ENCODE measurements at regions of chr11 and their contacts with region 1.

Region 1: GRCh38 chr11:62217191-62217748 is 8.8 kb downstream of the SCGB2A1 start:
- DNase-seq: peak; percentile 37
- H3K27ac ChIP-seq: no peak overlapping the region
- CTCF ChIP-seq: peak; percentile 45

Region 2: GRCh38 chr11:62048065-62048464 is 169.2 kb before region 1 on chr11:
- CTCF ChIA-PET with region 1: no interaction called
- POLR2A ChIA-PET with region 1: no interaction called
- DNase-seq: peak; percentile 24
- H3K27ac ChIP-seq: peak overlapping the region; percentile 68
- CTCF ChIP-seq: no peak

Region 3: DNA sequence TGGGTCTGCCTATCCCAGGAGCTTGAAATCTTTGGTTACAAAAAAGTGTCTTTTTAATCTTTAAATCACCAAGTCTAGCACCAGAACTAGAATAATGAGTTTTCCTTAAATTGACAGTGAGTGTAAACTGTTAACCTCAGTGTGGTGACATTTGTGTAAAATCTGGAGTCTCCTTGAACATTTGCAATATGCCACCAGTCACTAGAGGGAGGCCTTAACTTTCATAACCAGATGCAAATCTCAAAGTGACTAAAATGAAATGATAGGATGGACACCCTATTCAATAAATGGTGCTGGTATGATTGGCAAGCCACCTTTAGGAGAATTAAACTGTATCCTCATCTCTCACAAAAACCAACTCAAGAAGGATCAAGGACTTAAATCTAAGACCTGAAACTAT is 16.5 kb after region 1 on chr11:
- CTCF ChIA-PET with region 1: no interaction called
- POLR2A ChIA-PET with region 1: no interaction called
- DNase-seq: no peak
- H3K27ac ChIP-seq: no peak overlapping the region
- CTCF ChIP-seq: no peak

Region 4: DNA sequence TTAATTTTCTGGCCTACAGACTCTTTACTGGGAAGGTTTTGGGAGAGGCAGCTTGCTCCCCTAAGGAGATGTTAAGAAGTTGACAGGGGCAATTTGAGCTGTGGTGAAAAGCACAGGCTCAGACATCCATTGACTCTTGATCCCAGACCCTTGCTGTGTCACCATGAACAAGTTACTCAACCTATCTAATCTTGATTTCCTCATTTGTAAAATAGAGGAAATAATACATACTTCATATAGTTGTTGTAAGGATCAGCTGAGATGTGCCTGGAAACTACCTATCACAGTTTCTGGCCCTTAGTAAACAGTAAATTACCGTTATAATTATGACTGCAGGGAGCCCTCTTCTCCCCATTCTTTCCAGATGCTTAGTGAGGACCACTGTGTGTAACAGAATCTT is 98.2 kb after region 1 on chr11:
- CTCF ChIA-PET with region 1: interaction called, 19 read pairs
- POLR2A ChIA-PET with region 1: no interaction called
- DNase-seq: no peak
- H3K27ac ChIP-seq: no peak overlapping the region
- CTCF ChIP-seq: no peak

Region 5: GRCh38 chr11:62573592-62574362 is 356.5 kb after region 1 on chr11 and contains the start of gene EEF1G:
- CTCF ChIA-PET with region 1: no interaction called
- POLR2A ChIA-PET with region 1: no interaction called
- DNase-seq: peak; percentile 99
- H3K27ac ChIP-seq: peak within 1 kb of the TSS; percentile 86
- CTCF ChIP-seq: no peak

Measured in RWPE1 (cell line).